Naive thymus-derived CD4-positive, alpha-beta T cell (primary cell): ENCODE measurements at regions of chr2 and their contacts with region 1.

Region 1: DNA sequence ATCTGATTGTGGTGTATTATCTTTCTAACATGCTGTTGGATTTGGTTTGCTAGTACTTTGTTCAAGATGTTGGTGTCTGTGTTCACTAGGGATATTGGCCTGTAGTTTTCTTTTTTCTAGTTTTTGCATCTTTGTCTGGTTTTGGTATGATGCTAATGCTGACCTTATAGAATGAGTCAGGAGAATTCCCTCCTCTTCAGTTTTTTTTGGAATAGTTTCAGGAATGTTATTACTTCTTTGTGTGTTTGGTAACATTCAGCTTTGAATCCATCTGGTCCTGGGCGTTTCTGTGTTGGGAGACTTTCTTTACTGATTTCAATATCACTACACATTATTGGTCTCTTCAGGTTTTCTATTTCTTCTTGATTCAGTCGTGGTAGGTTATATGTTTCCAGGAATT is 124.2 kb upstream of the EPB41L5 start:
- DNase-seq: no peak
- ATAC-seq: no peak
- H3K4me3 ChIP-seq: no peak overlapping the region
- H3K4me3 Mint-ChIP-seq: no peak overlapping the region
- H3K27ac ChIP-seq: no peak overlapping the region
- H3K27ac Mint-ChIP-seq: no peak overlapping the region
- H3K4me1 ChIP-seq: no peaks in the 10 kb centered on the region
- H3K4me1 Mint-ChIP-seq: peaks cover 0 to 25% (median 4%) of the 10 kb centered on the region in 7 donors
- H3K27me3 ChIP-seq: no peaks in the 10 kb centered on the region
- H3K27me3 Mint-ChIP-seq: no peaks in the 10 kb centered on the region

Region 2: GRCh38 chr2:119871725-119872124 is 17.0 kb before region 1 on chr2:
- CTCF ChIA-PET with region 1: no interaction called
- POLR2A ChIA-PET with region 1: no interaction called
- intact Hi-C with region 1: loop called in 1 of 2 experiments (anchors 2 kb)
- DNase-seq: no peak
- ATAC-seq: no peak
- H3K4me3 ChIP-seq: no peak overlapping the region
- H3K4me3 Mint-ChIP-seq: no peak overlapping the region
- H3K27ac ChIP-seq: no peak overlapping the region
- H3K27ac Mint-ChIP-seq: no peak overlapping the region
- H3K4me1 ChIP-seq: peaks cover 0 to 16% of the 10 kb centered on the region in 2 donors
- H3K4me1 Mint-ChIP-seq: peaks cover 17 to 84% (median 69%) of the 10 kb centered on the region in 7 donors
- H3K27me3 ChIP-seq: no peaks in the 10 kb centered on the region
- H3K27me3 Mint-ChIP-seq: no peaks in the 10 kb centered on the region

Region 3: GRCh38 chr2:120142528-120143219 is 254.0 kb after region 1 on chr2:
- CTCF ChIA-PET with region 1: no interaction called
- POLR2A ChIA-PET with region 1: no interaction called
- intact Hi-C with region 1: no loop called
- DNase-seq: no peak
- ATAC-seq: no peak
- H3K4me3 ChIP-seq: no peak overlapping the region
- H3K4me3 Mint-ChIP-seq: no peak overlapping the region
- H3K27ac ChIP-seq: no peak overlapping the region
- H3K27ac Mint-ChIP-seq: no peak overlapping the region
- H3K4me1 ChIP-seq: no peaks in the 10 kb centered on the region
- H3K4me1 Mint-ChIP-seq: no peaks in the 10 kb centered on the region
- H3K27me3 ChIP-seq: no peaks in the 10 kb centered on the region
- H3K27me3 Mint-ChIP-seq: peaks cover 0 to 6% (median 0%) of the 10 kb centered on the region in 5 donors

Region 4: GRCh38 chr2:120939595-120940318 is 1051.1 kb after region 1 on chr2:
- CTCF ChIA-PET with region 1: no interaction called
- POLR2A ChIA-PET with region 1: no interaction called
- intact Hi-C with region 1: no loop called
- DNase-seq: no peak
- ATAC-seq: no peak
- H3K4me3 ChIP-seq: no peak overlapping the region
- H3K4me3 Mint-ChIP-seq: no peak overlapping the region
- H3K27ac ChIP-seq: no peak overlapping the region
- H3K27ac Mint-ChIP-seq: no peak overlapping the region
- H3K4me1 ChIP-seq: no peaks in the 10 kb centered on the region
- H3K4me1 Mint-ChIP-seq: no peaks in the 10 kb centered on the region
- H3K27me3 ChIP-seq: no peaks in the 10 kb centered on the region
- H3K27me3 Mint-ChIP-seq: peaks cover 0 to under 1% (median 0%) of the 10 kb centered on the region in 5 donors